Dorsolateral prefrontal cortex (tissue), 120 donors: ENCODE measurements at regions of chr19 and their contacts with region 1.

Region 1: DNA sequence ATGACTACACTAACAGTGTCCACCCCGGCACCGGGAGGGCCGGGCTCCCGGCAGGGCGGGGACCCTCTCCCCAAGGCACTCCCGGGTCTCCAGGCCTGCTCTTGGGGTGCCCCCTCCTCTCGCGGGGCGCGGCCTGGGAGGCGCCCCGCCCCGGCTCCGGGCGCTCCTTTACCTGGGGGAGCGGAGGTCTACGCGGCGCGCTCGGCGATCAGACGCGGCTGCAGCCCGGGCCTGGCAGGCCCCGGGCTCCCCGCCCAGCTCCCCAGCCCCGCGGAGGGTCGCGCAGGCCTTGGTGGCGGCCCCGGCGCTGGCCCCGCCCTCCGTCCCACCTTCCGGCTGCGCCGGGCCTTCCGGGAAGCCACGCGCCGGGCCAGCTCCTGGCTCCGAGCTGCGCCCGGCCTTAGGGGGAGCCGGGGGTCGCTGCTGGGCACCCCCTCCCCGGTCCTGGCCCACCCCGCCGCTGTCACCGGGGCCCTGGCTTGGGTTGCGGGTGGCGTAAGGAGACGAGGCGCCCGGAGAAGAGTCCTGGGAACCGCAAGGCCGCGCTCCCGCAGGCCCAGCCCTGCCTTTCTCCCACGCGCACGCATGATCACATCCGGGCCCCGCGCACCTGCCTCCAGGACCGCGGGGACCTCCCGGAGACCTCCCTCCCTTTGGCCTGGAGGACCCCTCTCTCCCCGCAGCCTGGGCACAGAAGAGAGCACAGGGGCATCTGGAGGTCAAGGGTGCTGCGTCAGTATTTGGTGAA is at the start of gene C19orf12:
- DNase-seq: peak in 8 of 10 donors; percentile 57 to 83 (median 60)
- H3K4me3 ChIP-seq: peak within 1 kb of the TSS; percentile 61 to 98 (median 89)
- H3K27ac ChIP-seq: peak within 1 kb of the TSS; percentile 66 to 97 (median 93)
- H3K27me3 ChIP-seq: no peaks in the 10 kb centered on the region
- CTCF ChIP-seq: peak in 22 of 56 donors; percentile 5 to 47 (median 24)
- total RNA-seq, gene C19orf12: 35.8 to 75.4 (median 58.2) TPM

Region 2: GRCh38 chr19:29212648-29213573 is 502.2 kb before region 1 on chr19 and contains the start of gene UQCRFS1:
- intact Hi-C with region 1: loop called in 1 of 2 experiments (anchors 5 kb)
- DNase-seq: peak; percentile 87 to 99 (median 92)
- H3K4me3 ChIP-seq: peak within 1 kb of the TSS; percentile 67 to 100 (median 94)
- H3K27ac ChIP-seq: peak within 1 kb of the TSS; percentile 15 to 97 (median 85)
- H3K27me3 ChIP-seq: no peaks in the 10 kb centered on the region
- CTCF ChIP-seq: peak in 31 of 56 donors; percentile 9 to 48 (median 25)
- total RNA-seq, gene UQCRFS1: 15.5 to 46.8 (median 33.1) TPM

Region 3: DNA sequence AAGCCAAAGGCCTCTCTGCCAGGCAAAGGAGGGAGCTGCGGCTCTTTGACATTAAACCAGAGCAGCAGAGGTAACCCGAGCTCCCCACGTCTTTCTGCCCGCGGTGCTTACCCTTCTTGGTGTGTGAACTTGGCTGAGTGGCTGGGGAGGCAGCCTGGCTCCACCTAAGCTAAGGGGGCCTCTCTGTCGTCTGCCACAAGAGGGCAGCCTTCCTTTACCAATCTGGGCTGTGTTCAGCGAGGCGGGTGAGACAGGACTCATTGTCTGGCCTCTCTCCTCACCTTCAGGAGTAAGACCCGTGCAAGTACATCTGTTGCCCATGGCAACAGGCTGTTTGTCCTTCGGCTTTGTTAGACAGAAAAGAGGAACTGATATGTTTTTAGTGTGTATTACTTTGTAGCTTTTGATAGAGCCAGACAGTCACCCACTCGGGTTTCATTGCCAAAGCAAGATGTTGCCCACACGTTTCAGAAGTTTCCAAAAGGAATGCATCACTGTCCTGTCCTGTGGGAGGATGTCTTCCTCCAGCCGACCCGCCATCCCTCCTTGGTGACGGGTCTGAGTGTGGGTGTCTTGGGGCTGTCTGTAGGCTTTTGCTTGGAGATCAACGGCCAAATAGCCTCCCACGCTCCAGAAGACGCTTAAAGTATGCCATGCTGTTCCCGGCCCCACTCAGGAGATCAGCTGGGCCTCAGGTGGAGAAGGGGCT is 104.4 kb before region 1 on chr19:
- intact Hi-C with region 1: loop called (anchors 1 to 2 kb)
- DNase-seq: peak; percentile 68 to 88 (median 81)
- H3K4me3 ChIP-seq: peak overlapping the region in 3 of 59 donors; percentile 3 to 9 (median 5)
- H3K27ac ChIP-seq: peak overlapping the region in 16 of 59 donors; percentile 6 to 47 (median 26)
- H3K27me3 ChIP-seq: no peaks in the 10 kb centered on the region
- CTCF ChIP-seq: peak; percentile 60 to 96 (median 89)

Region 4: GRCh38 chr19:29665215-29665825 is 49.8 kb before region 1 on chr19 and contains the start of gene PLEKHF1:
- intact Hi-C with region 1: loop called (anchors 1 to 5 kb)
- DNase-seq: peak; percentile 79 to 98 (median 90)
- H3K4me3 ChIP-seq: peak within 1 kb of the TSS; percentile 63 to 98 (median 89)
- H3K27ac ChIP-seq: peak within 1 kb of the TSS in 58 of 59 donors; percentile 19 to 90 (median 81)
- H3K27me3 ChIP-seq: no peaks in the 10 kb centered on the region
- CTCF ChIP-seq: peak in 11 of 56 donors; percentile 13 to 80 (median 43)
- total RNA-seq, gene PLEKHF1: 3.7 to 27.9 (median 8.5) TPM

Region 5: GRCh38 chr19:29694669-29695627 is 20.2 kb before region 1 on chr19:
- intact Hi-C with region 1: loop called (anchors 1 kb)
- DNase-seq: peak; percentile 86 to 94 (median 90)
- H3K4me3 ChIP-seq: peak overlapping the region in 1 of 59 donors; percentile 22
- H3K27ac ChIP-seq: peak overlapping the region; percentile 38 to 97 (median 90)
- H3K27me3 ChIP-seq: no peaks in the 10 kb centered on the region
- CTCF ChIP-seq: peak; percentile 69 to 98 (median 92)